ENCODE measurements at regions of chr17 and their contacts with region 1.

Region 1: GRCh38 chr17:37770631-37771518 is 26.0 kb upstream of the HNF1B start:
- DNase-seq: no peak
- H3K4me3 ChIP-seq: no peak overlapping the region
- CTCF ChIP-seq: peak; percentile 90

Region 2: GRCh38 chr17:37123941-37124820 is 646.7 kb before region 1 on chr17:
- CTCF ChIA-PET with region 1: no interaction called
- POLR2A ChIA-PET with region 1: no interaction called
- DNase-seq: no peak
- H3K4me3 ChIP-seq: no peak overlapping the region
- CTCF ChIP-seq: no peak

Region 3: GRCh38 chr17:37382056-37382455 is 388.8 kb before region 1 on chr17:
- CTCF ChIA-PET with region 1: no interaction called
- POLR2A ChIA-PET with region 1: no interaction called
- DNase-seq: no peak
- H3K4me3 ChIP-seq: no peak overlapping the region
- CTCF ChIP-seq: no peak

Region 4: GRCh38 chr17:37527249-37527851 is 243.5 kb before region 1 on chr17:
- CTCF ChIA-PET with region 1: interaction called, 18 read pairs
- POLR2A ChIA-PET with region 1: no interaction called
- DNase-seq: no peak
- H3K4me3 ChIP-seq: no peak overlapping the region
- CTCF ChIP-seq: peak; percentile 67

Region 5: DNA sequence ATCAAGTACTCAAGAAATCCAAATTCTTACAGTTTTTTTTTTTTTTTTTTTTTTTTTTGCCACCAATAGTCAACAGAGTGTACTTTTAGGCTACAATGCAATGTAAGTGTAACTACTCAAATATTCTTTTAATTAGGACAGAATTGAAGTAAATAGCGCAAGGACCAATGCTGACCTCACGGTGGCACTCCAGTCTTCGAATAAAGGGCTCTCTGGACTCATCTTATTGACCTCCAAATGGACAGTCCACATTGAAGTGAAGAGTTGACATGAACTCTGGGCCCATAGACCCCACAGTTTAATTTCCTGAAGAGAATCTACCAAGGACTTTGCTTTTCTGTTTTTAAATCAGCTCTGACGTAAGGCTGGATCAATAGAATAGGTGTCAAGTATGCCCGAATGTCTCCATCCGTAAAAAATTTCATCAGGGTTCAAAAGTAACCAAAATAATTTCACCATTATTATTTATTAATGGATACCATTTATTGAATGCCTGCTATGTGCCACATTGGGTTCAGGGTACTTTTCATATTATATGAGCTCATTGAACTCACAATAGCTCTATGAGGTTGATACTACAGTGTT is 120.4 kb before region 1 on chr17:
- CTCF ChIA-PET with region 1: interaction called, 146 read pairs
- POLR2A ChIA-PET with region 1: no interaction called
- DNase-seq: no peak
- H3K4me3 ChIP-seq: no peak overlapping the region
- CTCF ChIP-seq: peak; percentile 52

Region 6: DNA sequence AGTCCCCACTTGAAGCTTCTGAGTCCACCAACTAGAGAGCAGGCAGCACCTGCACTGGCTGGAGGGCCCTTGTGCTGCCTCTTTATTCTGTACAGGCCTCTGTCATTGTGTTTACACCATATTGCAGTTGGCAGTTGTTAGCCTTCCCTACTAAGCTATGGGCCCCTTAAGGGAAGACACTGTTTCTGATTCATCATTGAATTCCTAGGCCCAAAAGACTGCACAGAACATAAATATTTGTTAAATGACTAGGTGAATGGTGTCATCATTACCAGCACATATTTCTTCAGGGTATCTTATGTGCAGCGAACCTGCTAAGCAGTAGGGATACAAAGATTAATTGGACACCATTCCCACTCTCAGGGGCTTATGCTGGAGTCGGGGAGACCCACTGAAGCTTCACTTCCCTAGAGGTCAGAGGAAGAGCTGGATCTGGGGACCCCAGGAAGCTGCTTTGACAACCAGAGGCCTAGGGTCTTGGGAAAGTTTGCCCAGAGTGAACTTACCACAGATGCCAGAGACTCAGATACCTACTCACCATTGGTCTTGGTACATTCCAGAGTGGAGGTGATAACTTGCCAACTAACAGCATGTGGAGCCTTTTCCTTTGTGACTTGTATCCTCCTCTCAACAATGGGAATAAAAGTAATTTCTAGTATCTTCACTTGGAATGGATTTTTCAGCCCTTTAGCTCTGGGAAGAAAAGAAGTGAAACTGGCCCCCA is 98.9 kb before region 1 on chr17:
- CTCF ChIA-PET with region 1: interaction called, 18 read pairs
- POLR2A ChIA-PET with region 1: no interaction called
- DNase-seq: peak; percentile 88
- H3K4me3 ChIP-seq: no peak overlapping the region
- CTCF ChIP-seq: no peak

Region 7: GRCh38 chr17:37717627-37718323 is 53.1 kb before region 1 on chr17:
- CTCF ChIA-PET with region 1: interaction called, 11 read pairs
- POLR2A ChIA-PET with region 1: no interaction called
- DNase-seq: no peak
- H3K4me3 ChIP-seq: no peak overlapping the region; the same call in 1 of the 2 replicates
- CTCF ChIP-seq: no peak

Region 8: GRCh38 chr17:37759014-37759637 is 11.7 kb before region 1 on chr17:
- CTCF ChIA-PET with region 1: interaction called, 39 read pairs
- POLR2A ChIA-PET with region 1: no interaction called
- DNase-seq: no peak
- H3K4me3 ChIP-seq: no peak overlapping the region
- CTCF ChIP-seq: no peak

Region 9: DNA sequence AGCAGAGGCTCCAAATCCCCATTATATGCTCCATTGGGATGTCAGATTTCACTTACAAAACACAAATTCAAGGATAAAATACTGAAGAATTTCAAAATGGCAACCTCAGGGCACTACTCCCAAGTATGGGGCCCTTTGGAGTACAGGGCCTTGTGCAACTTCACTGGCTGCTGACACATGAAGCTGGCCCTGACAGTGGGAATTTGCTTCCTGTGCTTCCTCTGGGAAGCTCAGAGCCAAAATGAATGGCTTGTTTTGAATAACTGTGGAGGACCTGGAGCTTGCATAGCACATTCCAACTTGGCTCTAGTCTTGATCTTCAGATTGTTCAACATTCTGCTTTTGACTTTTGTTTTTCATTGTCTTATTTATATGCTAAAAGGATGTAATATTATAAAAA is 26.3 kb after region 1 on chr17:
- CTCF ChIA-PET with region 1: interaction called, 26 read pairs
- POLR2A ChIA-PET with region 1: no interaction called
- DNase-seq: no peak
- H3K4me3 ChIP-seq: no peak overlapping the region
- CTCF ChIP-seq: no peak